Activated B cell treated with CpG ODN at 0.5 μM for 24 hours (primary cell): ENCODE measurements at regions of chr7 and their contacts with region 1.

Region 1: GRCh38 chr7:139645572-139646523 is 122.4 kb downstream of the CLEC2L start:
- DNase-seq: peak; percentile 65
- ATAC-seq: peak; percentile 59
- H3K4me3 Mint-ChIP-seq: no peak overlapping the region
- H3K27ac Mint-ChIP-seq: no peak overlapping the region
- H3K4me1 Mint-ChIP-seq: peaks cover 39% of the 10 kb centered on the region
- H3K27me3 Mint-ChIP-seq: no peaks in the 10 kb centered on the region
- CTCF ChIP-seq: peak; percentile 79

Region 2: GRCh38 chr7:139004321-139005075 is 641.4 kb before region 1 on chr7:
- CTCF ChIA-PET with region 1: no interaction called
- POLR2A ChIA-PET with region 1: no interaction called
- intact Hi-C with region 1: no loop called
- DNase-seq: no peak
- ATAC-seq: no peak
- H3K4me3 Mint-ChIP-seq: no peak overlapping the region
- H3K27ac Mint-ChIP-seq: no peak overlapping the region
- H3K4me1 Mint-ChIP-seq: no peaks in the 10 kb centered on the region
- H3K27me3 Mint-ChIP-seq: peaks cover 2% of the 10 kb centered on the region
- CTCF ChIP-seq: no peak

Region 3: DNA sequence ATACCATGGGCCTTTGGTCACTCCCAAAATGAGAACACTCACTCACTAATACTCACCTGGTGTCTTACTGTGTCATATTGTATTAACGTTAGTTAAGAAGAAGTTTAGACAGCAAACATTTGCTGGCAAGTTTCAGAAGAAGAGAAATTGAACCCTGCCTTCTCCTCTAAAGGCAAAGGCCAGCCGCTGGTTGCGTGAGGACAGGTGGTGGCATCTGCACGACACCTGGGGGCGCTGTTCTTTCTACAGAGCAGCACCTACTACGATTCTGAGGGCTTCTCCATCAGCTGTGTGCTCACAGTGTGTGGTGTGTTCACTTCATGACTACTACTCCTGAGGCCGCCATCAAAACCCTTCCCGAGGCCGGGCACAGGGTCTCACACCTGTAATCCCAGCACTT is 140.3 kb before region 1 on chr7:
- CTCF ChIA-PET with region 1: interaction called, 3 read pairs
- POLR2A ChIA-PET with region 1: no interaction called
- intact Hi-C with region 1: loop called (anchors 5 kb)
- DNase-seq: no peak
- ATAC-seq: no peak
- H3K4me3 Mint-ChIP-seq: no peak overlapping the region
- H3K27ac Mint-ChIP-seq: no peak overlapping the region
- H3K4me1 Mint-ChIP-seq: no peaks in the 10 kb centered on the region
- H3K27me3 Mint-ChIP-seq: peaks cover 2% of the 10 kb centered on the region
- CTCF ChIP-seq: no peak

Region 4: DNA sequence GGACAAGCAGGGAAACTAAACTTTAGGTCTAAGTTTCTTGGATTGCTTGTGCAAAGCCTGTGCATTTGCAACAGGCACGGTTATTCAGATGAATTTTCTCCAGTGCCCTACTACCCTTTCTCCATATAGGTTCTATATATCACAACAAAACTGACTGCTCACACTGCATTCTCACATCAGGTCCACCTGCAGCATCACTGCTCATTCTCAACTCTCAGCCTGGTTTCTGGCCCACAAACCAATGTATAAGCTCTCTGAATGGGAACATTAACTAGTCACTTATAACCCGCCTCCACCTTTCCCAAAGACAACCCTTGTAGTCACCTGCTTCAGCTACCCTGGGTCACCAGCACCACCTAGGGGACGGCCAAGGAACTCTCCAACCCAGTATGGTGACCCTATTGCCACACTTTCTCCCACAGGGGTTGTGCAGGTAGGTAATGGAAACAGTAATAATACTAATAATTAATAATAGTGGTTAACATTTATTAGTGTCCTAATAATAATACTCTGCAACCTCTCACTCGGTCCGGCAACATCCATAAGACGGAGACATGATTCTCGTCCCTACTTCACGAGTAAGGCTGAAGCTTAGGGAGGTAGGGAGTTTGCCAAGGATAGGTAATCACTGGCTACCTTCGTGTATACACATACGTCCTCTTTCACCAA is 25.0 kb before region 1 on chr7:
- CTCF ChIA-PET with region 1: interaction called, 26 read pairs
- POLR2A ChIA-PET with region 1: no interaction called
- intact Hi-C with region 1: no loop called
- DNase-seq: no peak
- ATAC-seq: peak; percentile 49
- H3K4me3 Mint-ChIP-seq: no peak overlapping the region
- H3K27ac Mint-ChIP-seq: no peak overlapping the region
- H3K4me1 Mint-ChIP-seq: no peaks in the 10 kb centered on the region
- H3K27me3 Mint-ChIP-seq: no peaks in the 10 kb centered on the region
- CTCF ChIP-seq: no peak

Region 5: DNA sequence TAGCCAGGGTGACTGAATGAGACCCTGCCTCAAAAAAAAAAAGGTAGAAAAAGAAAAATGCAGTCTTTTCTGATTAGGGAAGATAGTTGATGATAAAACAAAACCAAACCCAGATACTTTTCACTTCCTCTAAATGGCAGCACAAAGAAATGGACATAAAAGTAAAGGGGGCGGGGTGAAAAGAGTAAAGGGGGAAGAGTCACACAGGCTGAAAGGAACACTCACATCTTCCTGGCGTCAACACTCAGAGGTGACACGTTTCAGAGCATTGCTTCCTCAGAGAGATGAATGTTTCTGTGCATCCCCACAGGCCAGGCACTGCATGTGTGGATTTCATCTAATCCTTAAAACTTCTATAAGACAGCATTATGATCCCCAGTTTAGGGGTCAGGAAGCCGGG is 50.7 kb after region 1 on chr7:
- CTCF ChIA-PET with region 1: no interaction called
- POLR2A ChIA-PET with region 1: no interaction called
- intact Hi-C with region 1: loop called (anchors 5 kb)
- DNase-seq: no peak
- ATAC-seq: peak; percentile 88
- H3K4me3 Mint-ChIP-seq: peak overlapping the region; percentile 17
- H3K27ac Mint-ChIP-seq: peak overlapping the region; percentile 77
- H3K4me1 Mint-ChIP-seq: peaks cover 57% of the 10 kb centered on the region
- H3K27me3 Mint-ChIP-seq: no peaks in the 10 kb centered on the region
- CTCF ChIP-seq: no peak

Region 6: DNA sequence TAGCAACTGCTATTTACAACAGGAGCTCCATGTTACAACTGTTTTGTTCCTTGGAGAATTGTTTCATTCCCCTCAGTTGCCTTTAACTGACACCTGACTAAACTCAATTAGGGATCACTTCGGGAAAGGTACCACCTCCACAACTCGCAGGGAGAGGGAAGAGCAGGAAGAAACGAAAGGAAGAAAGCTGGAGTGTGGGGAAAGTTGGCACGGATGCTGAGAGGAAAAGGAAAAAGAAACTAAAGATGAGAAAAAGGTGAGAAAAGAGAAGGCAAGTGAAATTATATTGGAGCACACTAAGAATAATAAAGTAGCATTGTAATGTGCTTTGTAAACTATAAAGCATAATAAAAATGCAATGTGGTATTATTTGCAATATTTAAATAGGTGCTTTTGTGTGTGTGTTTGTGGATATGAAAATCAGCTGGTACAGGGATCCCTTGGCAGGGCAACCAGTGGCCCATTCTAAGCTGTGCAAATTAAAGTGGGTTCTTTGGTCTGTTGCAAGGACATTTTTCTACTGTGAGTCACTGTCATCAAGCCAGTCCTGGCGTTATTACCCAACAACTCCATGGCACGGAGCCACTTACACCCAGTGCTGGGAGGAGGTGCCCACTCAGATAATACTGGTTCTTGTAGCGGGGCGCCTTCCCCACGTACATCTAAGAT is 86.1 kb after region 1 on chr7:
- CTCF ChIA-PET with region 1: interaction called, 6 read pairs
- POLR2A ChIA-PET with region 1: no interaction called
- intact Hi-C with region 1: loop called (anchors 5 kb)
- DNase-seq: no peak
- ATAC-seq: no peak
- H3K4me3 Mint-ChIP-seq: no peak overlapping the region
- H3K27ac Mint-ChIP-seq: peak overlapping the region; percentile 20
- H3K4me1 Mint-ChIP-seq: peaks cover 51% of the 10 kb centered on the region
- H3K27me3 Mint-ChIP-seq: no peaks in the 10 kb centered on the region
- CTCF ChIP-seq: no peak

Region 7: GRCh38 chr7:140003913-140004382 is 358.1 kb after region 1 on chr7:
- CTCF ChIA-PET with region 1: interaction called, 179 read pairs
- POLR2A ChIA-PET with region 1: interaction called, 4 read pairs
- intact Hi-C with region 1: loop called (anchors 1 kb)
- DNase-seq: no peak
- ATAC-seq: peak; percentile 49
- H3K4me3 Mint-ChIP-seq: no peak overlapping the region
- H3K27ac Mint-ChIP-seq: no peak overlapping the region
- H3K4me1 Mint-ChIP-seq: peaks cover 2% of the 10 kb centered on the region
- H3K27me3 Mint-ChIP-seq: no peaks in the 10 kb centered on the region
- CTCF ChIP-seq: no peak

Region 8: DNA sequence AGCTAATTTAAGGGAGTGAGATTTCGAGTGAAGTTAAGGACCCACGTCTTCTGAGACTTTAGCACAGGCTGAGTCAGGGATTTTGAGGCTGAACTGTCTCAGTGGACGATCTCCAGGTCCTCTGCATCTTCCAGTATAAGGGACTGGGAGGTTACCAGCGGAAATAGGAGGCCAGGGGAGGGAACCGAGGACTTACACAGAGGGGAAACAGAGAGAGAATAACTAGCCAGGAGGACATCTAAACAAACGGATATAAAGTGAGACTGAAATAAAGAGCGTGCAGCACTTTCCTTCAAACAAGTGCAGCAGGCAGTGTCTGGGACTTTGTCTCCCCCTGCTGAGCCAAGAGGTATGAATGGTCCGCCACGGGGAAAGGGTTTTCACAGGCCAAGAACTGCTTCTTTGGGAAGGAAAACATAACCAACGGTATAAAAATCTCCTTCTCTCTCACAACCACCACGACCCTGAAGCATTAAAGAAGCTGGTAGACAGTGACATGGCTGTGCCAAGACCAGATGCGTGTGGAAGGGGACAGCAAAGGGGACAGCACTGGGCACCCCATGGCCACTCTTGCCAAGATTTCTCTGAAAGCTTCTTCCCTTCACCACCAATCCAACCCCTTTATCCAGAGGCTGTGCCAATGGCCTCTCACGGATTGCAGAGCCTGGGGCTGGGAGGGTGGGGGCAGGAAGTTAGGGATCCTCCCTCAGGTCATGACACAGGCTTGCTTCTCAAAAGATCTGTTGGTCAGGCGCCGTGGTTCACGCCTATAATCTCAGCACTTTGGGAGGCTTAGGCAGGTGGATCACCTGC is 680.5 kb after region 1 on chr7:
- CTCF ChIA-PET with region 1: no interaction called
- POLR2A ChIA-PET with region 1: no interaction called
- intact Hi-C with region 1: loop called (anchors 1 kb)
- DNase-seq: peak; percentile 21
- ATAC-seq: peak; percentile 75
- H3K4me3 Mint-ChIP-seq: no peak overlapping the region
- H3K27ac Mint-ChIP-seq: no peak overlapping the region
- H3K4me1 Mint-ChIP-seq: no peaks in the 10 kb centered on the region
- H3K27me3 Mint-ChIP-seq: no peaks in the 10 kb centered on the region
- CTCF ChIP-seq: no peak